ENCODE measurements at regions of chr1 and their contacts with region 1.

Region 1: DNA sequence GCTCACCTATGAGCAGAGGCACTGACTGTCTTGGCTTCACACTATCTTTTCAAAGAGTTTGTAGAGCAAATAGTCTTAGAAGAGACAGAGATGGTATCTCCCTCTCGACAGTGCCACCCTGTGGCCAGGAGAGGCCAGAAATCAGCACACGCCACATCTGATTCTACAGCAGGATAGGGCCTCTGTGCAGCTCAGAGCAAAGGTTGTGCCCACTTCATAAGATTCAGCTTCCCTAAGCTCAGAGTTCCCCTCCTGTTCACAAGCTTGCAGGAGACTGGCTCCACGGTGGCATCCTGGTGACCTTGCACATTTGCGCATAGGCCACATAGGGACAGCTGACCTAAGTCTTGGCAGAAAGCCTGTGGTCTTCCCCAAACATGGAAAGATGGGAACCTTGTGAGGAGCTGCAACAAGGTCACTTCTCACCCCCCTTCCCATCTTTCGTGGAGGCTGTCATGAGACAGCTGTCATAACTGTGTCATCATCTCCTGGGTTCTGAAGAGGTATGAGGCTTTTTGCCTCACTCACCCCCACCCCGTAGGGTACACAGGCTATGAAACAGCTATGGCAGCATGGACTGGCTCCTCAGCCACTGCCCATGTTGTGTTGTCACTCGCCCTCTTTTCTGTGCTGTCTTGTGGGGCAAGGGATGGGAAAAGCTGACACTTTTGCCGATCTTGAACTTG is 3.0 kb downstream of the ITLN2 start:
- DNase-seq: peak; percentile 70 to 71
- ATAC-seq: peak; percentile 86 to 90
- H3K4me3 ChIP-seq: no peak overlapping the region
- H3K27ac ChIP-seq: peak overlapping the region in 1 of 2 experiments; percentile 24; a peak in 1 of 6 replicates
- H3K4me1 ChIP-seq: peaks cover 50% of the 10 kb centered on the region
- CTCF ChIP-seq: peak; percentile 73
- EP300 ChIP-seq: no peak
- POLR2A ChIP-seq: no peak
- RAD21 ChIP-seq: peak; percentile 74 to 79

Region 2: DNA sequence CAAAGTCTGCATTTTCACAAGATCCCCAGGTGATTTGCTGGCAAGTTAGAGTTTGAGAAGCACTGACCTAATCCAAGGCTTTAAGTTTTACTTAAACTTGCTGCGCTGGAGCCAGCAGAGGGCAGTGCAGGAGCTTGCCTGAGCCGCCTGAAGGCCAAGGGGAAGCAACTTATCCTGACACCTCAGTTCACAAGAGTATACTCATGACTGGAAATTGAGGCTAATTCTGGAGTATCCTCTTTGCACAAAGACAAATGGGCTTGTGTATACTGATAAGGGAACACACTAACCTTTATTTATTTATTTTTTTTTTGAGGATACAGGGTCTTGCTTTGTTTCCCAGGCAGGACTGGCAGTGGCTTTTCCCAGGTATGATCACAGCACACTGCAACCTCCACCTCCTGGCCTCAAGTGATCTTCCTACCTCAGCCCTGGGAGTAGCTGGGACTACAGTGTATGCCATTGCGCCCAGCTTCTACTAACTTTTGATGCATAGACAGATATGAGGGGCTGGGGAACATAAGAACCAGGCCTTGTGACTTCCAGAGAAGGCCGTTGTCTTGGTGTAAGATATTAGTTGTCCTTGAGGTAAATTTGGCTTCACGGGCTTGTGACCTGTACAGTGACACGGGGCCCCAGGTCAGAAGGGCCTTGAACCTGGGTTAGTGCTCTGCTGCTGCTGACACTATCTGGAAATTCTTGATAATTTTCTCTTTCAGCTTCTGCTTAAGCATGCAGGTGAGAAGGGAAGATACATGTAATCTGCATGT is 275.8 kb before region 1 on chr1:
- CTCF ChIA-PET with region 1: interaction called, 15 read pairs
- POLR2A ChIA-PET with region 1: no interaction called
- DNase-seq: peak; percentile 45 to 77
- ATAC-seq: peak; percentile 92 to 97
- H3K4me3 ChIP-seq: no peak overlapping the region
- H3K27ac ChIP-seq: no peak overlapping the region
- H3K4me1 ChIP-seq: no peaks in the 10 kb centered on the region
- CTCF ChIP-seq: peak; percentile 80
- EP300 ChIP-seq: no peak
- POLR2A ChIP-seq: no peak
- RAD21 ChIP-seq: peak; percentile 73 to 78

Region 3: GRCh38 chr1:160681067-160681890 is 270.3 kb before region 1 on chr1:
- CTCF ChIA-PET with region 1: interaction called, 15 read pairs
- POLR2A ChIA-PET with region 1: no interaction called
- DNase-seq: peak; percentile 43 to 84
- ATAC-seq: peak; percentile 78 to 97
- H3K4me3 ChIP-seq: no peak overlapping the region
- H3K27ac ChIP-seq: no peak overlapping the region
- H3K4me1 ChIP-seq: no peaks in the 10 kb centered on the region
- CTCF ChIP-seq: peak; percentile 51
- EP300 ChIP-seq: no peak
- POLR2A ChIP-seq: no peak
- RAD21 ChIP-seq: peak; percentile 56 to 79

Region 4: GRCh38 chr1:160726498-160727315 is 224.9 kb before region 1 on chr1:
- CTCF ChIA-PET with region 1: interaction called, 97 read pairs
- POLR2A ChIA-PET with region 1: no interaction called
- DNase-seq: peak; percentile 81 to 86
- ATAC-seq: peak; percentile 89 to 94
- H3K4me3 ChIP-seq: no peak overlapping the region
- H3K27ac ChIP-seq: peak overlapping the region; percentile 26 to 68; a peak in 5 of 6 replicates
- H3K4me1 ChIP-seq: peaks cover 14% of the 10 kb centered on the region
- CTCF ChIP-seq: peak; percentile 91
- EP300 ChIP-seq: no peak
- POLR2A ChIP-seq: no peak
- RAD21 ChIP-seq: peak; percentile 92 to 94

Region 5: DNA sequence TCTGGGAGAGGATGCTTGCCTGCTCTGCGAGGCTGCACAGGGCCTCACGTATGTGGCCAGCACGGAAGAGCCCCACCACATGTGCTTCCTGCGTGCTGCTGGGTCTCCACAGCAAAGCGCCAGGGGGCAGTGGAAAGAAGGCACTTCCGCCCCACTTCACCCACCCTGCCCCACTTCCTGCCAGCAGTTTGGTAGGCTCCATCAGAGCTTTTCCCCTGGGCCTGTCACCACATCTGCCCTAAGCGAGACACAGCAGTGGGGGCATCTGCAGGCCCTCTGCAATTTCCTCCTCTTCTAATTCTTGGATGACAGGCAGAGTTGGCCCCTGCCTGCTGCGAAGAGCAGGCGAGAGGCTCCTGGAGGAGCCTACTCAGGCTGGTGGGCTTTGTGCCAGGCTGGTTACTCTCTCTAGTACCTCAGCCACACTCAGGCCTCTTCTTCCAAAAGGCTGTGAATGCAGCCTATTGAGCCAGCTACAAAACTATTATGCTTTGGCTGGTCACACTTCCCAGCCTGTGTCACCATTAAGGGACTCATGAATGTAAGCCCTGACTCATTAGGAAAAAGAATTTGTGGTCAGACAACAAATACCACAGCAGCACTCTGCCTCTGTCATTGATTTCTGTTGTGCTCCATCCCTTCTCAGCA is 113.9 kb before region 1 on chr1:
- CTCF ChIA-PET with region 1: interaction called, 149 read pairs
- POLR2A ChIA-PET with region 1: no interaction called
- DNase-seq: no peak
- ATAC-seq: no peak
- H3K4me3 ChIP-seq: no peak overlapping the region
- H3K27ac ChIP-seq: no peak overlapping the region
- H3K4me1 ChIP-seq: no peaks in the 10 kb centered on the region
- CTCF ChIP-seq: no peak
- EP300 ChIP-seq: no peak
- POLR2A ChIP-seq: no peak
- RAD21 ChIP-seq: no peak

Region 6: GRCh38 chr1:160963521-160963920 is 11.9 kb after region 1 on chr1:
- CTCF ChIA-PET with region 1: interaction called, 29 read pairs
- POLR2A ChIA-PET with region 1: no interaction called
- DNase-seq: no peak
- ATAC-seq: no peak
- H3K4me3 ChIP-seq: no peak overlapping the region
- H3K27ac ChIP-seq: no peak overlapping the region
- H3K4me1 ChIP-seq: no peaks in the 10 kb centered on the region
- CTCF ChIP-seq: no peak
- EP300 ChIP-seq: no peak
- POLR2A ChIP-seq: no peak
- RAD21 ChIP-seq: no peak

Region 7: GRCh38 chr1:160971618-160972056 is 20.1 kb after region 1 on chr1:
- CTCF ChIA-PET with region 1: interaction called, 17 read pairs
- POLR2A ChIA-PET with region 1: no interaction called
- DNase-seq: no peak
- ATAC-seq: no peak
- H3K4me3 ChIP-seq: no peak overlapping the region
- H3K27ac ChIP-seq: no peak overlapping the region
- H3K4me1 ChIP-seq: no peaks in the 10 kb centered on the region
- CTCF ChIP-seq: no peak
- EP300 ChIP-seq: no peak
- POLR2A ChIP-seq: no peak
- RAD21 ChIP-seq: no peak

Region 8: GRCh38 chr1:161008924-161009510 is 57.4 kb after region 1 on chr1:
- CTCF ChIA-PET with region 1: no interaction called
- POLR2A ChIA-PET with region 1: no interaction called
- DNase-seq: no peak
- ATAC-seq: no peak
- H3K4me3 ChIP-seq: no peak overlapping the region
- H3K27ac ChIP-seq: peak overlapping the region in 1 of 2 experiments; percentile 65; a peak in 3 of 6 replicates
- H3K4me1 ChIP-seq: peaks cover 38% of the 10 kb centered on the region
- CTCF ChIP-seq: no peak
- EP300 ChIP-seq: peak in 1 of 2 experiments; percentile 50; a peak in 2 of 5 replicates
- POLR2A ChIP-seq: no peak
- RAD21 ChIP-seq: no peak